ENCODE measurements at regions of chrX and their contacts with region 1.

Region 1: DNA sequence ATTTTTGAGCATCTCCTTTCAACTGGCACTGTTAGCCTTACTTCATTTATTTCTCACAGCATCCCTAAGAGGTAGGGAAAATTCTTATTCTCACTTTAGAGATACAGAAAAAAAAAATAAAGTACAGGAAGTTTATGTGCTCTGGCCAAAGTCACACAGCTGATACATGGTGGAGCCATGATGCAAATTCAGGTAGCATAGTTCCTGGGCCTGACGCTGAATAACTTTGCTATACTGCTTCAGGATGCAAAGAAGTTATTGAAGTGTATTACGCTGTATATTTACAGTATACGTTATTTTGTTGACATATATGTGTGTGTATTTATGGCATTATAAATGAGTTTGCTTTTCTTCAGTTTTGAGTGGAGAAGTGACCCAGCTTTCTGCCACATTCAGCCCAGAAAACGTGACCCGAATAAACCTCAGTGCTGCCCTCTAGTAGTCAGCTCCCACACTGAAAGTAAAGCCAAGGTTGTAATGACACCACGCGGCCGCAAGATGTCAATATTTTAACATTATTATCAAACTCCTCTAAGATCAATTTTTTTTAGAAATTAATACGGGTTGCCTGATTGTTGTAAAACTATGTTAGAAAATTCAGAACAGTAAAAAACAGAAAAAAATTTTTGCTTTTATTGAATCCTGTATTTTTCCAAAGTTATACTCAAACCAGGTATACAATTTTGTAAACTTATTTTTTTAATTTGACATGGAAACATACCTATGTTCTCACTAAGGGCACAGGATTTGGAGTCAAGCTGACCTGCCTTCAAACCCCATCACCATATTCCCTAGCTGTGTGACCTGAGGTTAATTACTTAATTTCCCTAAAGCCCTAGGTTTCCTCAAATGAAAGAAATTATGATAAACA is 3.8 kb upstream of the GUCY2F start:
- DNase-seq: peak; percentile 34 to 64
- ATAC-seq: peak; percentile 66

Region 2: GRCh38 chrX:109890895-109891502 is 405.3 kb after region 1 on chrX:
- intact Hi-C with region 1: loop called in 1 of 2 experiments (anchors 5 kb)
- DNase-seq: peak; percentile 36 to 50
- ATAC-seq: peak; percentile 65

Measured in left colon (tissue), 2 donors.